ENCODE measurements at regions of chr3 and their contacts with region 1.

Region 1: GRCh38 chr3:142279965-142280590 is 54.7 kb upstream of the GK5 start:
- DNase-seq: peak; percentile 59
- H3K4me3 ChIP-seq: no peak overlapping the region
- H3K27ac ChIP-seq: no peak overlapping the region
- H3K4me1 ChIP-seq: peaks cover 7% of the 10 kb centered on the region
- H3K27me3 ChIP-seq: no peaks in the 10 kb centered on the region
- CTCF ChIP-seq: peak; percentile 58 to 66

Region 2: DNA sequence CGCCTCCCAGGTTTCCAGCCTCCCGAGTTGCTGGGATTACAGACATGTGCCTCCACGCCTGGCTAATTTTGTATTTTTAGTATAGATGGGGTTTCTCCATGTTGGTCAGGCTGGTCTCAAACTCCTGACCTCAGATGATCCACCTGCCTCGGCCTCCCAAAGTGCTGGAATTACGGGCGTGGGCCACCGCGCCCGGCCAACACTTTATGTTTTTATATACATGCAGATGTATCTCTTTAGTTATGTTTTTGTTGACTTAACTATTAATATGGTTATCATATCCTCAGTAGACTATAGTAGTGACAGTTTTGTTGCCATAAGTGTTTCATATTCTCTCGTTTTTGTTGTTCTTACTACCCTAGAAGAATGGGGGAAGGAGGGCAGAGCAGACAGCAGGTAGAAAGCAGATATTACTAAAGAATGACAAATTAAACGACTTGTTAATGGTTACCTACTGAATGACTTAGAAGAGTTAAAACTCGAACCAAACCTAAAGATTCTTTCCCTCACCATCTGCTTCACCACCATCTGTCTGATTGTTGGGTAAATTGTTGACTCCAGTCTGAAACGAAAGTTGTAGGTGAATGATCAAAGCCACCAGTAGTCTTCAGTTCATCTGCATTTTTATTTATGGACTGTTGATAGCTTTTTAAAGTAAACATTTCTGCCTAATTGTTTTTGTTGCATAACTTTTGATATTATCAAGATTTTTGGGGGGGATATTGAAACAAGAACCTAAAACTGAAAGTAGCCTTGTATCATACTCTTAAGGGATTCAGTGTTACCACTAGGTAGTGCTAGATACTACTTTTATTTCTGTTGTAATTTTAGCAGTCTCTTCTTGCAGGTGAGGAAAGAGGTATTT is 704.0 kb before region 1 on chr3:
- CTCF ChIA-PET with region 1: no interaction called
- dilution Hi-C with region 1: no loop called
- in situ Hi-C with region 1: no loop called
- intact Hi-C with region 1: loop called (anchors 5 kb)
- DNase-seq: no peak
- H3K4me3 ChIP-seq: no peak overlapping the region
- H3K27ac ChIP-seq: no peak overlapping the region
- H3K4me1 ChIP-seq: no peaks in the 10 kb centered on the region
- H3K27me3 ChIP-seq: no peaks in the 10 kb centered on the region
- CTCF ChIP-seq: peak; percentile 41 to 47

Region 3: GRCh38 chr3:141782454-141782853 is 497.6 kb before region 1 on chr3:
- CTCF ChIA-PET with region 1: no interaction called
- dilution Hi-C with region 1: no loop called
- in situ Hi-C with region 1: no loop called
- intact Hi-C with region 1: loop called (anchors 5 kb)
- DNase-seq: peak; percentile 12
- H3K4me3 ChIP-seq: no peak overlapping the region
- H3K27ac ChIP-seq: no peak overlapping the region
- H3K4me1 ChIP-seq: no peaks in the 10 kb centered on the region
- H3K27me3 ChIP-seq: no peaks in the 10 kb centered on the region
- CTCF ChIP-seq: peak in 1 of 2 donors; percentile 56

Region 4: GRCh38 chr3:142022381-142022780 is 257.7 kb before region 1 on chr3:
- CTCF ChIA-PET with region 1: no interaction called
- dilution Hi-C with region 1: no loop called
- in situ Hi-C with region 1: no loop called
- intact Hi-C with region 1: loop called (anchors 1 kb)
- DNase-seq: no peak
- H3K4me3 ChIP-seq: no peak overlapping the region
- H3K27ac ChIP-seq: no peak overlapping the region
- H3K4me1 ChIP-seq: peaks cover 7% of the 10 kb centered on the region
- H3K27me3 ChIP-seq: no peaks in the 10 kb centered on the region
- CTCF ChIP-seq: no peak

Region 5: GRCh38 chr3:142180761-142181362 is 99.2 kb before region 1 on chr3:
- CTCF ChIA-PET with region 1: no interaction called
- dilution Hi-C with region 1: no loop called
- in situ Hi-C with region 1: no loop called
- intact Hi-C with region 1: loop called (anchors 1 kb)
- DNase-seq: peak; percentile 1
- H3K4me3 ChIP-seq: no peak overlapping the region
- H3K27ac ChIP-seq: no peak overlapping the region
- H3K4me1 ChIP-seq: no peaks in the 10 kb centered on the region
- H3K27me3 ChIP-seq: no peaks in the 10 kb centered on the region
- CTCF ChIP-seq: peak; percentile 45 to 62

Region 6: DNA sequence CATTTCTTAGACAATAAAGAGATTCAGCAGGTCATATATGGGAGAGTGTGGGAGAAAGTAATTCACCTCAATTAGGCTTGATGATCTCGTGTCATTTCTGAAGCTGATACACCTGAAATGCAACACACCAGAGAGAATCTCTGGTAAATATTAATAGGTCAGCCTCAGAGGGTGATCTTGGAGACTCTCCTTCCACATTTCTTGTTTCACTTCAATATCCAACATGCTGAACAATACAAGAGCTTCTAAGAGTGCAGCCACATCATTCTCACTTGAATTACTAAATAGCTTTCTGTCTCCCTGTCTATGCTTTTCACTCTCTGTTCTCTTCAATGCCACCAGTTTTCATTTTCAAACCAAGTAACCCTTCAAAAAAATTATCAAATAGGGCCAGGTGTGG is 16.4 kb after region 1 on chr3:
- CTCF ChIA-PET with region 1: no interaction called
- dilution Hi-C with region 1: no loop called
- in situ Hi-C with region 1: no loop called
- intact Hi-C with region 1: no loop called
- DNase-seq: no peak
- H3K4me3 ChIP-seq: no peak overlapping the region
- H3K27ac ChIP-seq: no peak overlapping the region
- H3K4me1 ChIP-seq: no peaks in the 10 kb centered on the region
- H3K27me3 ChIP-seq: no peaks in the 10 kb centered on the region
- CTCF ChIP-seq: no peak

Region 7: DNA sequence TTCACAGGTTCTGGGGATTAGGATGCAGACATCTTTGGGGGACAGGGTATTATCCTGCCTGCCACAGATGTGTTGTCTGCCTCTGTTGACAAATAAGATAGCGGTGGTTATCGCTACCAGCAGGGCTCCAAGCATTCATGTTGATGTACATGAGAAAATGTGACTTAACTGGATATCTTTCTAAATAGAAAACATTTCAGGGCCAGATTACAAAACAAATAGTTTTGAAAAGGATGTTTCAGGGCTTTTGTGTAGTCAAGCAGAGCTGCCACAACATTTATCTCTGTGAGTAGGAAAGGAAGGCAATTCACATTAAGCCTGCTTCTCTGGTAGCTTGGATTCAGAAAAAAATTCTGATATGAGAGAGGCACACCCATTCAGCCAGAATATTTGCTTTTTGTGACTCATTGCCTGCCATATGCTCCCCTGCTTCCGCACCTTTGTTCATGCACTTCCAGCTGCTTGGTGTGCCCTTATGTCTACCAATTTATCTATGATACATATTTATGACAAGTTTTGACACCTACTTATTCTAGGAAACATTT is 338.9 kb after region 1 on chr3:
- CTCF ChIA-PET with region 1: no interaction called
- dilution Hi-C with region 1: no loop called
- in situ Hi-C with region 1: no loop called
- intact Hi-C with region 1: no loop called
- DNase-seq: peak; percentile 35
- H3K4me3 ChIP-seq: no peak overlapping the region
- H3K27ac ChIP-seq: no peak overlapping the region
- H3K4me1 ChIP-seq: peaks cover 10% of the 10 kb centered on the region
- H3K27me3 ChIP-seq: no peaks in the 10 kb centered on the region
- CTCF ChIP-seq: no peak

Measured in mammary epithelial cell (primary cell).